Left ventricle myocardium inferior (tissue), 1 donor: ENCODE measurements at regions of chr17 and their contacts with region 1.

Region 1: GRCh38 chr17:42428141-42428944 is 5.3 kb upstream of the CAVIN1 start:
- DNase-seq: no peak
- H3K4me3 ChIP-seq: no peak overlapping the region
- H3K27ac ChIP-seq: peak overlapping the region; percentile 7
- H3K4me1 ChIP-seq: peaks cover 45% of the 10 kb centered on the region
- H3K27me3 ChIP-seq: no peaks in the 10 kb centered on the region
- CTCF ChIP-seq: peak; percentile 68

Region 2: DNA sequence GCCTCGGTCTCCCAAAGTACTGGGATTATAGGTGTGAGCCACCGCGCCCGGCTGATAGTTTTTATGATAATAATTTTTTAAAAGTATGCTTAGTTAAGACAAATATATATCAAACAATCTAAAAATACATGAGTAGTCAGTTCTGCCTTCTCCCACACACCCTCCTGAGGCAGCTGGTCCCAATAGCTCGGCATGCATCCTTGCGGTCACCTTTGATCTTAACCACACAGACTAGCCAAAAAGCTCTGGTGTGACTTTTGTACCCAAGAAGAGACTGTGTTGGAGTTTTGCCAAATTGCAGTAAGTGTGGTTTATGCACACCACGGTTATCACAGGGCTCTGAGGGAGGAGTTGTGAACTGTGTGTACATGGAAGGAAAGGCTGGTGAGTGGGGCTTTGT is 56.0 kb after region 1 on chr17:
- intact Hi-C with region 1: no loop called
- DNase-seq: no peak
- H3K4me3 ChIP-seq: no peak overlapping the region
- H3K27ac ChIP-seq: no peak overlapping the region
- H3K4me1 ChIP-seq: peaks cover 11% of the 10 kb centered on the region
- H3K27me3 ChIP-seq: no peaks in the 10 kb centered on the region
- CTCF ChIP-seq: no peak

Region 3: GRCh38 chr17:42517516-42517915 is 89.2 kb after region 1 on chr17:
- intact Hi-C with region 1: loop called (anchors 5 kb)
- DNase-seq: peak; percentile 89
- H3K4me3 ChIP-seq: no peak overlapping the region
- H3K27ac ChIP-seq: peak overlapping the region; percentile 98
- H3K4me1 ChIP-seq: peaks cover 86% of the 10 kb centered on the region
- H3K27me3 ChIP-seq: no peaks in the 10 kb centered on the region
- CTCF ChIP-seq: peak; percentile 93